Calu3 (cell line): ENCODE measurements at regions of chr9 and their contacts with region 1.

Region 1: GRCh38 chr9:17229945-17230560 is 95.2 kb downstream of the CNTLN start:
- DNase-seq: peak; percentile 20
- H3K4me3 Mint-ChIP-seq: peak overlapping the region; percentile 44
- H3K27ac Mint-ChIP-seq: peak overlapping the region; percentile 96
- H3K4me1 Mint-ChIP-seq: peaks cover 25% of the 10 kb centered on the region
- H3K27me3 Mint-ChIP-seq: no peaks in the 10 kb centered on the region
- CTCF ChIP-seq: no peak

Region 2: GRCh38 chr9:17165764-17166163 is 64.3 kb before region 1 on chr9:
- CTCF ChIA-PET with region 1: no interaction called
- intact Hi-C with region 1: no loop called
- DNase-seq: no peak
- H3K4me3 Mint-ChIP-seq: no peak overlapping the region
- H3K27ac Mint-ChIP-seq: no peak overlapping the region
- H3K4me1 Mint-ChIP-seq: no peaks in the 10 kb centered on the region
- H3K27me3 Mint-ChIP-seq: no peaks in the 10 kb centered on the region
- CTCF ChIP-seq: no peak

Region 3: DNA sequence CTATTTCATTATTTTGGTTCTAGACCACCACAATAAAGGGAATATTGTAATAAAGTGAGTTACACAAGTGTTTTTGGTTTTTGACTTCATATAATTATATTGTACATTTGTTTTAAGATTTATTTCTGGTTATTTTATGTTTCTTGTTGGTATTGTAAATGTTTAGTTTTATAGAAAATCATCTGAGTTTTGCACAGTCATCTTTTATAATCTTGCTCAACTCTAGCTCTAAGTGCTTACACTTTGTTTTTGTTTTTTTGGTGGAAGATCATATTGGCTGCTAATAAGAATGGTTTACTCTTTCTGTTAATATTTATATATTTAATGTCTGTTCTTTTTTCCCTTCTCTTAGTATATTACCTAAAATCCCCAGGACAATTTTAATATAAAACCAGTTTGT is 39.7 kb after region 1 on chr9:
- CTCF ChIA-PET with region 1: interaction called, 4 read pairs
- intact Hi-C with region 1: loop called (anchors 2 kb)
- DNase-seq: no peak
- H3K4me3 Mint-ChIP-seq: no peak overlapping the region
- H3K27ac Mint-ChIP-seq: peak overlapping the region; percentile 56
- H3K4me1 Mint-ChIP-seq: no peaks in the 10 kb centered on the region
- H3K27me3 Mint-ChIP-seq: no peaks in the 10 kb centered on the region
- CTCF ChIP-seq: no peak

Region 4: DNA sequence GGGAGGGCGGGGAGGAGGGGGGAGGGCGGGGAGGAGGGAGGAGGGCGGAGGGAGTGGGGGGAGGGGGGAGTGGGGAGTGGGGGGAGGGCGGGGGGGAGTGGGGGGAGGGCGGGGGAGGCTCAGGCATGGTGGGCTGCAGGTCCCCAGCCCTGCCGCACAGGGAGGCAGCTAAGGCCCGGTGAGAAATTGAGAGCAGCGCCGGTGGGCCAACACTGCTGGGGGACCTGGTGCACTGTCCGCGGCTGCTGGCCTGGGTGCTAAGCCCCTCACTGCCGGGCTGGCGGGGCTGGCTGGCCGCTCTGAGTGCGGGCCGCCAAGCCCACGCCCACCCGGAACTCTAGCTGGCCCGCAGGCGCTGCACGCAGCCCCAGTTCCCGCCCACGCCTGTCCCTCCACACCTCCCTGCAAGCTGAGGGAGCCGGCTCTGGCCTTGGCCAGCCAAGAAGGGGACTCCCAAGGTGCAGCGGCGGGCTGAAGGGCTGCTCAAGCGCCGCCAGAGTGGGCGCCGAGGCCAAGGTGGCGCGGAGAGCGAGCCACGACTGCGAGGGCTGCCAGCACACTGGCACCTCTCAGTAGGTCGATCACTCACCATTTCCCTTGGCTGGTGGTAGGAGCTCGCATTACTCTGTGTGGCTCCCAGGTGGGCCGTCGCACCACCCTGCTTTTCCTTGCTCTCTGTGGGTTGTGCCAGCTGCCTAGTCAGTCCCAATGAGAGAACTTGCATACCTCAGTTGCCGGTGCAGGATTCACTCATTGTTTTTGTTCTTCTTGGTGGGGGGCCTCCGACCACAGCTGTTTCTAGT is 65.0 kb after region 1 on chr9:
- CTCF ChIA-PET with region 1: no interaction called
- intact Hi-C with region 1: no loop called
- DNase-seq: no peak
- H3K4me3 Mint-ChIP-seq: no peak overlapping the region
- H3K27ac Mint-ChIP-seq: no peak overlapping the region
- H3K4me1 Mint-ChIP-seq: no peaks in the 10 kb centered on the region
- H3K27me3 Mint-ChIP-seq: no peaks in the 10 kb centered on the region
- CTCF ChIP-seq: no peak

Region 5: GRCh38 chr9:17318821-17319320 is 88.8 kb after region 1 on chr9:
- CTCF ChIA-PET with region 1: no interaction called
- intact Hi-C with region 1: loop called (anchors 5 kb)
- DNase-seq: no peak
- H3K4me3 Mint-ChIP-seq: no peak overlapping the region
- H3K27ac Mint-ChIP-seq: no peak overlapping the region
- H3K4me1 Mint-ChIP-seq: no peaks in the 10 kb centered on the region
- H3K27me3 Mint-ChIP-seq: no peaks in the 10 kb centered on the region
- CTCF ChIP-seq: no peak